CD4-positive, alpha-beta memory T cell (primary cell): ENCODE measurements at regions of chr10 and their contacts with region 1.

Region 1: GRCh38 chr10:33155720-33156638 is 178.5 kb downstream of the NRP1 start:
- DNase-seq: peak; percentile 59 to 71 (median 67)
- H3K4me3 ChIP-seq: no peak overlapping the region
- H3K4me3 Mint-ChIP-seq: peak overlapping the region in 6 of 8 donors; percentile 3 to 79 (median 50)
- H3K27ac ChIP-seq: no peak overlapping the region
- H3K27ac Mint-ChIP-seq: peak overlapping the region; percentile 21 to 98 (median 84)
- H3K4me1 ChIP-seq: peaks cover 53% of the 10 kb centered on the region
- H3K4me1 Mint-ChIP-seq: peaks cover 35 to 54% (median 48%) of the 10 kb centered on the region in 4 donors
- H3K27me3 ChIP-seq: no peaks in the 10 kb centered on the region
- H3K27me3 Mint-ChIP-seq: no peaks in the 10 kb centered on the region

Region 2: DNA sequence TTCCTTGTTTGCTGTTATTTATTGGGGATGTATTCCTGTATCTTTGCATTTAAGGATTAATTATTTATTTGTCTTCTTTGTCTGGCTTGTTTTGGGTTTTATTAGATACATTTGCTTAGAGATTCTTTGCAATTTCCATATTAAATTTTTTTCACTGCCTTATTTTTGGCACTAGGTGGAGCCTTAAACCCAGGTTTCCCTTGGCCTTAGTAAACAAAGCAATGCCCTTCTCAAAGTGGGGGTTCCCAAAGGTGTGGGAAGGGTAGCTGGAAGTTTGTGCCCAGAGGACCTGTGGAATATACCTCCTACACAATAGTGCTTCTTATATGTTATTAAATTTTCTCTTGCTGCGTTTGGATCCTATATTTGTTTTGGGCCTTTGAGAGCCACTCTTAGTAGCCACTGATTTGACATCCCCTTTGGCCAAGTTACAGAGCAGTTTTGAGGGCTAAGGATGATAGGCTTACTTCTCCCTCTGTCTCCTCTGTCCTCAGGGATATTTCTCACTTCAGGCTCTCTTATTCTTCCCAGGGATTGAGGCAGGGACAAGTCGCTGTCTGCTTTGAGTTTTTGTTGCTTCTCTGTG is 360.3 kb before region 1 on chr10:
- CTCF ChIA-PET with region 1: interaction called, 8 read pairs
- POLR2A ChIA-PET with region 1: interaction called, 3 read pairs
- intact Hi-C with region 1: loop called (anchors 1 kb)
- DNase-seq: peak in 4 of 5 donors; percentile 34 to 46 (median 35)
- H3K4me3 ChIP-seq: no peak overlapping the region
- H3K4me3 Mint-ChIP-seq: no peak overlapping the region
- H3K27ac ChIP-seq: no peak overlapping the region
- H3K27ac Mint-ChIP-seq: peak overlapping the region in 4 of 7 donors; percentile 1 to 47 (median 22)
- H3K4me1 ChIP-seq: no peaks in the 10 kb centered on the region
- H3K4me1 Mint-ChIP-seq: peaks cover 0 to 5% (median 2%) of the 10 kb centered on the region in 4 donors
- H3K27me3 ChIP-seq: no peaks in the 10 kb centered on the region
- H3K27me3 Mint-ChIP-seq: no peaks in the 10 kb centered on the region

Region 3: GRCh38 chr10:32958085-32959005 is 197.6 kb before region 1 on chr10 and contains the start of gene ITGB1:
- CTCF ChIA-PET with region 1: interaction called, 3 read pairs
- POLR2A ChIA-PET with region 1: interaction called, 12 read pairs
- intact Hi-C with region 1: loop called (anchors 5 kb)
- DNase-seq: peak; percentile 83 to 85 (median 85)
- H3K4me3 ChIP-seq: peak within 1 kb of the TSS; percentile 76 to 88
- H3K4me3 Mint-ChIP-seq: peak within 1 kb of the TSS; percentile 87 to 96 (median 92)
- H3K27ac ChIP-seq: peak within 1 kb of the TSS; percentile 69
- H3K27ac Mint-ChIP-seq: peak within 1 kb of the TSS; percentile 90 to 96 (median 94)
- H3K4me1 ChIP-seq: peaks cover 35% of the 10 kb centered on the region
- H3K4me1 Mint-ChIP-seq: peaks cover 41 to 61% (median 48%) of the 10 kb centered on the region in 4 donors
- H3K27me3 ChIP-seq: no peaks in the 10 kb centered on the region
- H3K27me3 Mint-ChIP-seq: no peaks in the 10 kb centered on the region
- total RNA-seq, gene ITGB1: 420 to 435 TPM

Region 4: DNA sequence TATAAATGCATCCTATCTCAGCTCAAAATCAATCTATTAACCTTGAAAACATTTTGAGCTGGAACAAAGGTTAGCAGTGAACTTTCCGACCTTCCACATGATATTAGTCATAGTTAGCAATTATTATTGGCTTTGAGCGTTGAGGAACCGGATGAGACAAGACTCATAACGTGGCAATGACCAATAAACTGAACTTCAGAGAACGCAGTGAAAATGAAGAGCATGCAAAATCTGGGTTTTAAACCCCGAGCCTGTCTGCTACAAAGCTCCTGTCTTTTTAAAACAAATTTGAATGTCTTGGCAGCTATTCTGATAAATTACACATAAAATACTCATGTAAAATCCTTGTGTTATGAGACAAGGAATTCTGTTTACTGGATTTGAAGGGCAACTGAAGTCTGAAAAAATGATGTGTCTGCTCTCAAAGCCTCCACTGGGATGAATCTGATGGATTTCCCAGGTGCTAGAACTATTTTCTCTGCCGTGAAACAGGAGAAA is 123.3 kb before region 1 on chr10:
- CTCF ChIA-PET with region 1: interaction called, 3 read pairs
- POLR2A ChIA-PET with region 1: interaction called, 31 read pairs
- intact Hi-C with region 1: loop called (anchors 1 kb)
- DNase-seq: no peak
- H3K4me3 ChIP-seq: no peak overlapping the region
- H3K4me3 Mint-ChIP-seq: peak overlapping the region in 5 of 8 donors; percentile 6 to 50 (median 22)
- H3K27ac ChIP-seq: no peak overlapping the region
- H3K27ac Mint-ChIP-seq: peak overlapping the region; percentile 43 to 90 (median 81)
- H3K4me1 ChIP-seq: peaks cover 57% of the 10 kb centered on the region
- H3K4me1 Mint-ChIP-seq: peaks cover 38 to 55% (median 47%) of the 10 kb centered on the region in 4 donors
- H3K27me3 ChIP-seq: no peaks in the 10 kb centered on the region
- H3K27me3 Mint-ChIP-seq: no peaks in the 10 kb centered on the region

Region 5: DNA sequence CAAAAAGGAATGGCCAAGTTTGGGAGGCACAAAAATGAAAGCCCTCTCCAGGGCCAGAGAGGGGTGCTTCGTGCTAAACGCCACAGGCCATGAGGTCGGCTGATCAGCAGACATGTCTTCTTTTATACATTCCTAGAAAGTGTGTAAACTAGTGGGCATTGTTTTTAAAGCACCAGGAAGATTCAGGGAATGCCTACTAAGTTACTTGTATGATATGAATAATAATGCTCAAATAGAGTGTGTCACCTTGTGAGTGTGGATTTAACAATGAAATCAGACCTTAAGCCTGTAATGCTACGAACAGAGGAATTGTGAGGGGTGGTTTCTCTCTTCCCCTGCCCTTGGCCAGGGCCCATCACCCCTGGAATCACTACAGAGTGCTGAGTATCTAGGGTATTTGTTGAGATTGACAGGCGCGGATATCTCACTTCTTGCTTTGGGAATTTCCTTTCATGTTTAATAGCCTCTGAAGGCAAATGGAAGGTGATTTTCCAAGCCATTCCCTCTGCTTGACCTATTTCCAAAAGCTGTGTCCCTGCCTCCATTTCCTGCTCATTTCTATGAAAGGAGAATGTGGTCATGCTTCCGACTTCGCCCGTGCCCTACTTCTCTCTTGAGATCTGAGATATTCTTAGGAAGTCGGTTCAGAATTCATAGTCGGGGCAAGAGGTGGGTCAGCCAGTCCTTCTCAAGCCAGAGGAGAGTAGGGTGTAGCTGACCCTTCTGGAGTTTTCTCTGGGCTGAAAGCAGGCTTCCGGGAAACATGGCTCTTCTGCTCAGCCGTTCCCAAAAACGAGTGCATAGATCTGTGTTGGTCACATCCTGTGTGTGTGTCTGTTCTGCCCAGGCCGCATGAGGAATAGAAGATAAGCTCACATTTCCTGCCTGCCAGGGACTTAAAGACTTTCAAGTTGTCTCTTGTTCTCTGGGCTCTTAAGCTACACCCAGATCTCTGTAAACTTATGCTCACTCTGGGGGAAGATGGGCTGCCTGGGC is 30.2 kb before region 1 on chr10:
- CTCF ChIA-PET with region 1: interaction called, 102 read pairs
- POLR2A ChIA-PET with region 1: interaction called, 2,213 read pairs
- intact Hi-C with region 1: no loop called
- DNase-seq: peak; percentile 58 to 72 (median 66)
- H3K4me3 ChIP-seq: no peak overlapping the region
- H3K4me3 Mint-ChIP-seq: peak overlapping the region; percentile 37 to 81 (median 65)
- H3K27ac ChIP-seq: peak overlapping the region; percentile 72
- H3K27ac Mint-ChIP-seq: peak overlapping the region; percentile 91 to 98 (median 97)
- H3K4me1 ChIP-seq: peaks cover 93% of the 10 kb centered on the region
- H3K4me1 Mint-ChIP-seq: peaks cover 61 to 98% (median 84%) of the 10 kb centered on the region in 4 donors
- H3K27me3 ChIP-seq: no peaks in the 10 kb centered on the region
- H3K27me3 Mint-ChIP-seq: no peaks in the 10 kb centered on the region

Region 6: DNA sequence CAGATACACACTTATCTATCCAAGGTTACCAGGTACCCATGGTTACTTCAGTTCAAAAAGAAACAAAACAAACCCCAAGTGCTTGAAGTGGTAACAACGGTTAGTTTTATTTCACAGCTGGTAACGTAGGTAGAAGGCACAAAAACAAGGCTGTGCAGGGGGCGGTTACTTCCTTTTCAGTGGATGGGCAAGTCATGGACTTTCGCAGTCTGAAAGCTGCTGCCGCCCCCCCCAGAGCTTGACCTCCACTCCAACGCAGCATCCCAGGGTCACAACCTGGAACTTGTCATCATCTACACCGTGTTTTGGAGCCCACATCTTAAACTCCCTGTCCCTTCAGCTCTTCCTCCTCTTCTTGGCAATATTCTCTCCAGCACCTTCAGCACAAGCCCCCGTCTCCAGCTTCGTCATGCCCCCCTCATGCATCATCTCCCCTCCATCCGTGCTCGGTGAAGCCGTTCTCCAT is 16.8 kb before region 1 on chr10:
- CTCF ChIA-PET with region 1: interaction called, 102 read pairs
- POLR2A ChIA-PET with region 1: interaction called, 2,213 read pairs
- intact Hi-C with region 1: loop called (anchors 1 kb)
- DNase-seq: peak; percentile 94 to 97 (median 95)
- H3K4me3 ChIP-seq: peak overlapping the region; percentile 10 to 54
- H3K4me3 Mint-ChIP-seq: peak overlapping the region; percentile 57 to 81 (median 75)
- H3K27ac ChIP-seq: peak overlapping the region; percentile 84
- H3K27ac Mint-ChIP-seq: peak overlapping the region; percentile 98 to 100 (median 100)
- H3K4me1 ChIP-seq: peaks cover 92% of the 10 kb centered on the region
- H3K4me1 Mint-ChIP-seq: peaks cover 63 to 93% (median 80%) of the 10 kb centered on the region in 4 donors
- H3K27me3 ChIP-seq: no peaks in the 10 kb centered on the region
- H3K27me3 Mint-ChIP-seq: no peaks in the 10 kb centered on the region

Region 7: GRCh38 chr10:33355274-33355673 is 199.3 kb after region 1 on chr10:
- CTCF ChIA-PET with region 1: no interaction called
- POLR2A ChIA-PET with region 1: no interaction called
- intact Hi-C with region 1: no loop called
- DNase-seq: no peak
- H3K4me3 ChIP-seq: no peak overlapping the region
- H3K4me3 Mint-ChIP-seq: no peak overlapping the region
- H3K27ac ChIP-seq: no peak overlapping the region
- H3K27ac Mint-ChIP-seq: no peak overlapping the region
- H3K4me1 ChIP-seq: no peaks in the 10 kb centered on the region
- H3K4me1 Mint-ChIP-seq: no peaks in the 10 kb centered on the region
- H3K27me3 ChIP-seq: no peaks in the 10 kb centered on the region
- H3K27me3 Mint-ChIP-seq: peaks cover 11 to 13% of the 10 kb centered on the region in 2 donors